GM12878 (cell line): ENCODE measurements at regions of chrX and their contacts with region 1.

Region 1: DNA sequence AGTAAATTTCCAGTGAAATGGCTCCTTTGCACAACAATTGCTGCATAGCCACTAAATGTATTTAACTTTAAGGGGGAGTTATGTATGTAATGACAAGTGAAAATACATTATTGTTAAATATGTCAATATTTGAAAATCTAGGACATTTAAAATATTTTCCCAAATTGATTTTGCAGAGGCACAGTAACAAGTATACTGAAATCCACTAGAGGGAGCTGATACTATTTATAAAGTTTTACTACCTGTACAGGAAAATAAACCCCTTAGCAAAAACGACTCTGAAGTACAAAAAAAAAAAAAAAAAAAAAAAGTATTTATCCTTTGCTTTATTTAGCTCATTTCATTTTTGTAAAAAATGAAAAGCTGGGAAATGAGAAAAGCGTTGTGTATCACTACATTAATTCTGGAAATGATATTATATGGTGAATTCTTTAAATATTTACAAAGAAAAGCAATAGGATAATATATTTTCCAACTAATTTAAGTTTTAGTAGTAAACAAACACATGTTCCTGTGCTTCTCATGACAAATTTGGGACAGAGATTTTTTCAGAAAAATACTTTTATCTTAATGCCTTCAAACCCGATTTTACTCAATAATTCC is 727.7 kb downstream of the DMD start:
- DNase-seq: no peak
- ATAC-seq: peak; percentile 47; the same call in 1 of the 3 replicates
- H3K4me3 ChIP-seq: no peak overlapping the region
- H3K27ac ChIP-seq: no peak overlapping the region
- H3K4me1 ChIP-seq: no peaks in the 10 kb centered on the region
- H3K27me3 ChIP-seq: no peaks in the 10 kb centered on the region
- CTCF ChIP-seq: peak in 2 of 3 experiments; percentile 21 to 32; a peak in 3 of 6 replicates
- EP300 ChIP-seq: no peak
- POLR2A ChIP-seq: no peak
- RAD21 ChIP-seq: no peak; the same call in 1 of the 2 replicates

Region 2: GRCh38 chrX:32370456-32371205 is 113.0 kb before region 1 on chrX:
- CTCF ChIA-PET with region 1: no interaction called
- POLR2A ChIA-PET with region 1: no interaction called
- RAD21 ChIA-PET with region 1: no interaction called
- SMC1A ChIA-PET with region 1: no interaction called
- in situ Hi-C with region 1: no loop called
- intact Hi-C with region 1: no loop called
- DNase-seq: no peak
- ATAC-seq: no peak
- H3K4me3 ChIP-seq: no peak overlapping the region
- H3K27ac ChIP-seq: no peak overlapping the region
- H3K4me1 ChIP-seq: no peaks in the 10 kb centered on the region
- H3K27me3 ChIP-seq: no peaks in the 10 kb centered on the region
- CTCF ChIP-seq: no peak
- EP300 ChIP-seq: no peak
- POLR2A ChIP-seq: no peak
- RAD21 ChIP-seq: no peak

Region 3: GRCh38 chrX:32673193-32673592 is 189.6 kb after region 1 on chrX:
- CTCF ChIA-PET with region 1: interaction called, 3 read pairs
- POLR2A ChIA-PET with region 1: no interaction called
- RAD21 ChIA-PET with region 1: no interaction called
- SMC1A ChIA-PET with region 1: no interaction called
- in situ Hi-C with region 1: no loop called
- intact Hi-C with region 1: loop called (anchors 2 kb)
- DNase-seq: no peak
- ATAC-seq: peak; percentile 52
- H3K4me3 ChIP-seq: no peak overlapping the region
- H3K27ac ChIP-seq: no peak overlapping the region
- H3K4me1 ChIP-seq: no peaks in the 10 kb centered on the region
- H3K27me3 ChIP-seq: no peaks in the 10 kb centered on the region
- CTCF ChIP-seq: peak in 2 of 3 experiments; percentile 15 to 28; a peak in 2 of 6 replicates
- EP300 ChIP-seq: no peak
- POLR2A ChIP-seq: no peak
- RAD21 ChIP-seq: peak; percentile 36; the same call in 1 of the 2 replicates